KBM-7 (cell line): ENCODE measurements at regions of chrX and their contacts with region 1.

Region 1: DNA sequence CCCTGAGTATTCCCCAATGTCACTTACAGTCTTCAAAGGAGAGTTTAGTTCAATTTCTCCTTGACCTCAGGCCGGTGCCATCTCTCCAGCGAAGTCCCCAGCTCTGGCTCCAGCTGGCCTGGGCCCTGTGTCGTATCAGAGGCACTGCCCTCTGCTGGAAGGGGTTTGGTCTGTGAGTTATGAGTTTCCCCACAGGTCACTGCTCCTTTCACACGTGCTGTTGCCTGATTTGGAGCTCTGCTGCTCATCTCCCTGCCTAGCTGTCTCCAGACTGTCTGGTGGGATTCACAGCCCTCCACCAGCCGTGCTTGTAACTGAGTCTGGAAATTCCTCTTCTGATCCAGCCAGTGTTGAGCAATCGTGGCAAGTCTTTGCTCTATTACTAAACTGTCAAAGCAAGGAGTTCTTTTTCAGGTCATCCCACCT is at the start of gene RAP2C:
- DNase-seq: peak; percentile 85

Region 2: DNA sequence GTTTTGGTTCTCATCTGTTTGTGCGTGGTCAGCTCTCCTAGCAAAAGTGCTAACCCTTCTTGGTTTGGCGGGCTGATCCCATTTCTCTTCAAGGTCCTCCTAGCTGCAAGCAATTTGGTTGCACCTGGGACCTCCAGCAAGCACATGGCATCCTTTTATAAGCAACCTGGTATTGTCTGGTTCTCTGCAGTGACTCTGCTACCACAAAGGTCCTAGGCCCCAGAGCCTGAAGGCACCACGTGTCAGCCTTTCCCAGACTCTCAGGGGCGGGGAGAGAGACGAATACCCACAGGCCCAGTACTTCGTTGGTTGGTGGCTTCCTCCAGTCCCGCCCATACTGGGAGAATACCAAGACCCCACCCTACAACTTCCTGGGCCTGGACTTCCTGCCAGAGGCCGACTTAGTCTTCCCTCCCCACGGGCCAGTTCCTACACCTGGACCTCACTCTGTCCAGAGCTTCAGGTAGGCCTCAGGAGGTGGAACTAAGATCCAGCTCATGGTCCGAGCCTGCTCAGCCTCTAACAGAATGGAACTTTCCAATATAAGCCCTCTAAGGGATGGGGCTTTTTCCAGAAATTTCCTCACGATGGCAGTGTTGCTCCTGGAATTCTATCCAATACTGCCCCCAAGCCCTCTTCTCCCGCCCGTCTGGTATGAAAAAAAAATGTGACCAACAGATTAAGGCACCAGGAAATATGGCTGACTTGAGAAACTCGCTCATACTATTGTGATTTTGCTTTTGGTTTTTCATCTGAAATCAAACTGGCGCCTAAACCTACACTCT is 388.8 kb before region 1 on chrX:
- in situ Hi-C with region 1: loop called (anchors 25 kb)
- DNase-seq: peak; percentile 98

Region 3: GRCh38 chrX:132092439-132093065 is 126.8 kb before region 1 on chrX:
- in situ Hi-C with region 1: loop called (anchors 25 kb)
- DNase-seq: peak; percentile 80